ENCODE measurements at regions of chr5 and their contacts with region 1.

Region 1: DNA sequence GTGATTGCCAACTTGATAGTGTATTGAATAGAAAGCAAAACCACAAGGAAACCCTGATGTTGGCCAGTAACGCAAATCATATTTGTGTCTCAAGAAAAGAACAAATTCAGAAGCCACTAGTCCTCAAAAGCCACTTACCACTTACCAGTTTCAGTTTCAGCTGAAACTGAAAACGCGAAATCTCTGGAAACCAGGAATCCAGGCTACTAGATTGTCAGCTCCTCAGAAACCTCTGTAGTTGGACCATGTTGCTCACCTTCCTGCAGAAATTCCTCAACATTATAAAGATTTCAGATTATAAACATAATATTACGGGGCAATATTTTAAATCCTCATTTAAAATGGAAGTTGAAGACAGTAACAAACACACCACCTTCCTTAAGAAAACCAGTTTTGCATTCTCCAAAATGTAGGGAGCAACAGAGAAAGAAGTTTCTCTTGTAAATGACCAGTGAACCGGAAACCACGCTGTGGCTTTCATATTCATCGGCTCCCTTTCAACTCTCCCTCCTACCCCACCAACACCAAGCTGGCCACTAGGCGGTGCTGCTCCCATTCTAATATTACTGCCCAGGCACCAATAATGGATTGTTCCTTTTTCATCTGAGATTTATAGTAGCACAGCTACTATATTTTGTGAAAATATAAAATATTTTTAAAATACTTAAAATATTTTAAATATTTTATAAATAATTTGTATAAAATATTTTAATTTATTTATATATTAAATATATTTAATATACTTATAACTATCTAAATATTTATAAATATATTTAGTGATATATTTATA is 8.7 kb upstream of the TMED7 start:
- DNase-seq: peak; percentile 74
- ATAC-seq: peak; percentile 91
- H3K4me3 Mint-ChIP-seq: peak overlapping the region; percentile 41
- H3K27ac Mint-ChIP-seq: no peak overlapping the region
- H3K4me1 Mint-ChIP-seq: peaks cover 9% of the 10 kb centered on the region
- H3K27me3 Mint-ChIP-seq: peaks cover 4% of the 10 kb centered on the region
- CTCF ChIP-seq: peak; percentile 76

Region 2: DNA sequence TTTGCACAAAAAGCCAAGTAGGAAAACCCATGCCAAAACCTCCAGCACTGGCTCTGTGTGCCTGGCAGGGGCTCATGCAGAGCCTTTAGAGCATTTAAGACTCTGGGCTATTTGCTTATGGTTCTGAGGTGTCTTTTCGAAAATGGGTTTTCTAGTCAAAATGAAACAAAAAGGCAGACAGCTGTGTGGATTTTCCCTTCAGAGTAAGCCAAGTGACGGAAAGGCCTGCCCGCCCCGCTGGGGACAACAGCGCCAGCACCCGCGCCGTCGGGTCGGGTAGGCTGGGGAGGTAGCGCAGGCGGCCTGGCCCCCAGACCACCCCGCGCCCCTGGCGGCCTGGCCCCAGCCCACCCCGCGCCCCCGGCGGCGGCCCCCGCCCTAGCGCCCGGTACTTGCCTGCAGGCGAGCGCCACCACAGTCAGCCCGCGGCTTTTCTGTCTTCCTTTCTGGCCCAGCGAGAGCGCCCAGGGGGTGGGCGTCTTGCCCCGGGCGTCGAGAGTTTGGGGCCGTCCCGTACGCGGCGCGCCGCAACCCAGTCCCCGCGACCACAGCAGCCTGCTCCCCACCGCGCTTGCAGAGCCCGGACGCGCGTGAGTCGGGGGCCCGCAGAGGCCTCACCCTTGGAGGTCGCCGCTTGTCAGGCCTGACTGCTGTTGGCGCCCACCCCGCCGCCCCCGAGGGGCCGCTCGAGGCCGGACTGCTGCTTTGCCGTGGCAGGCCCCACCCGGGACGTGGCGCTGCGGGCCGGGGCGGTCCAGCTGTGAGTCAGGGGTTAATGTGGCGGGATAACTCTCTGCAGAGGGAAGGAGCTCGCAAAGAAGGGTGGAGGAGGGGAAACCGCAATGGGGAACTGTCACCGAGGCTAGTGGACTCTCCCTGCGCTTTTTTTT is 32.6 kb before region 1 on chr5 and contains the start of gene TICAM2:
- CTCF ChIA-PET with region 1: no interaction called
- POLR2A ChIA-PET with region 1: no interaction called
- intact Hi-C with region 1: loop called (anchors 1 kb)
- DNase-seq: peak; percentile 68
- ATAC-seq: peak; percentile 80
- H3K4me3 Mint-ChIP-seq: peak within 1 kb of the TSS; percentile 88
- H3K27ac Mint-ChIP-seq: peak within 1 kb of the TSS; percentile 98
- H3K4me1 Mint-ChIP-seq: peaks cover 56% of the 10 kb centered on the region
- H3K27me3 Mint-ChIP-seq: no peaks in the 10 kb centered on the region
- CTCF ChIP-seq: no peak
- total RNA-seq, gene TICAM2: 12.4 and 13.3 TPM in 2 replicates

Region 3: DNA sequence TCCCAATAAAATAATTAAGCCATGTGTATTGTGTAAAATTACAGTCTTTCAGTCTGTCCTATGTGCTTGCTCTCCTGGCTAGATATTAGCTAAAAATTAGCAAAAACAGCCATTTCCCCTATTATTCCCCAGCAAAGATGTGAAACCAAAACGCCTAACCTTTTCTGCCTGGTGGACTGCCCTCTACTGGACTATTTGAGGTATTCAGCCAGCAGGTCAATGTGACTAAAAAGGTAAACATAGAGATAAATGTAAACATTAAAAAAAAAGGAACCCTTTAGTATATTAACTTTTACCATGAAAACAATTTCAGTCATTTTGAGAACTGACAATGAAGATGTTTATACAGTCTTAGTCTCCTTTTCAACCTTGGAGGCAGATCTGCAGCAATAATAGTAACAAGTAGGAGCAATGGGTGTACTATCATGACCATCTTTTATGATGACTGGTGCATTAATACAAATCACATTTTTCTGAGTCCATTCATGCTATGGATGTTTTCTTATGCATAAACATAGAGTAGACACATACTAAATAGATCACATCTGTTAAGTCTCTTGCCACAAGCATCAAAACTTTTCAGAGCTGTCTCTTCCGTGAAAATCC is 196.7 kb after region 1 on chr5:
- CTCF ChIA-PET with region 1: interaction called, 20 read pairs
- POLR2A ChIA-PET with region 1: no interaction called
- intact Hi-C with region 1: loop called (anchors 1 kb)
- DNase-seq: no peak
- ATAC-seq: peak; percentile 64
- H3K4me3 Mint-ChIP-seq: no peak overlapping the region
- H3K27ac Mint-ChIP-seq: no peak overlapping the region
- H3K4me1 Mint-ChIP-seq: peaks cover 5% of the 10 kb centered on the region
- H3K27me3 Mint-ChIP-seq: no peaks in the 10 kb centered on the region
- CTCF ChIP-seq: peak; percentile 87

Region 4: DNA sequence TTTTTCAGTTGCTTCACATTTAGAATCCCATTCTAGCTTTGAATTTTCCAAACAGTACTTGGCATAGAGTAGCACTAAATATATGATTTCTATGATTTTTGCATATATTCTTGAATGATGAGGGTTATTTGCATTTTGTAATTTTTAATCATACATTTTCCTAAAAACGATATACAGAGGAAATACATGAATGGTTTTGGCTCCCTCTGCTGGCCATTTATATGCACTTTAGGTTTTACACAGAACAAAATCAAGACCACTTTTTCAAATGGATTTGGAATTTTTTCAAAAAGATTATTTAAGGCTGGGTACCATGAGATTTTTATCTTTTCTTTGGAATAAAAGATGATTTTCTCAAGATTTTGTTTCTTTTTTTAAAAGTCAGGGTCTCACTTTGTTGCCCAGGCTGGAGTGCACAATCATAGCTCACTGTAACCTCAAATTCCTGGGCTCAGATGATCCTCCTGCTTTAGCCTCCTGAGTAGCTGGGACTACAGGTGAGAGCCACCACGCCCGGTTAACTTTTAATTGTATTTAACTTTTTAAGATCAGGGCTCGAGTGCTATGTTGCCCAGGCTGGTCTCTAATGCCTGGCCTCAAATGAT is 433.6 kb after region 1 on chr5:
- CTCF ChIA-PET with region 1: interaction called, 23 read pairs
- POLR2A ChIA-PET with region 1: interaction called, 11 read pairs
- intact Hi-C with region 1: loop called (anchors 1 kb)
- DNase-seq: no peak
- ATAC-seq: no peak
- H3K4me3 Mint-ChIP-seq: no peak overlapping the region
- H3K27ac Mint-ChIP-seq: no peak overlapping the region
- H3K4me1 Mint-ChIP-seq: no peaks in the 10 kb centered on the region
- H3K27me3 Mint-ChIP-seq: no peaks in the 10 kb centered on the region
- CTCF ChIP-seq: peak; percentile 84